ENCODE measurements at regions of chr15 and their contacts with region 1.

Region 1: DNA sequence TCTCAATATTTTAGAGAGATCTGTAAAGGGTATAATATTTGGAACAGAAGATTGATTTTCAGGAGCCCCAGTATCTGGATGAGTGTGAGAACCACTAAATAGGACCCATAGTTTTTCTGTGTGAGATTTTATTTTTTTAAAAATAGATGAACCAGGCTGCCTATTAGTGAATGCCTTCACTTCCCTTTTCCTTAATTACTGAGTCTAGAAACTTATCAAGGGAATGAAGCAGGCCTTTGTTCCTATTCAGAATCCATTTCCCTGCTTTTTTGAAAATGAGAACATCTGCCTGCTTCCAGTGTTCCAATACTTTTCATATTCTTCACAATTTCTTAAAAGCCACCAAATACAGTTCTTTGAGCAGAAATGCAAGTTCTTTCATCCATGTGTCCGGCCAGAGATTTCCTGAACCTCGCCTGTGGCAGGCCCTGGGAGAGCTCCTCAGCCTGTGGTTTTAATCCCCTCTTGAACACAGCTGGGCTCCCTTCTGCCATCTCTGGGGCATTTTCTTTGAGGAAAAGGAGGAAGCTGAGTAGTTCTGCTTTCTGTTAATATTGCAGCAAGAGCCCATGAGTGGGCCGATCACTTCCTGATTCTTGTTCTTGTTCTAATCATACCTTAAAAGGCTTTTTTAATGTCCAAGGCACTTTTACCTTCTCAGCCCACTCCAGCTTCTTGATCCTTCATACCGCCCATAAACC is 4.7 kb downstream of the EHD4 start:
- DNase-seq: peak; percentile 77

Region 2: DNA sequence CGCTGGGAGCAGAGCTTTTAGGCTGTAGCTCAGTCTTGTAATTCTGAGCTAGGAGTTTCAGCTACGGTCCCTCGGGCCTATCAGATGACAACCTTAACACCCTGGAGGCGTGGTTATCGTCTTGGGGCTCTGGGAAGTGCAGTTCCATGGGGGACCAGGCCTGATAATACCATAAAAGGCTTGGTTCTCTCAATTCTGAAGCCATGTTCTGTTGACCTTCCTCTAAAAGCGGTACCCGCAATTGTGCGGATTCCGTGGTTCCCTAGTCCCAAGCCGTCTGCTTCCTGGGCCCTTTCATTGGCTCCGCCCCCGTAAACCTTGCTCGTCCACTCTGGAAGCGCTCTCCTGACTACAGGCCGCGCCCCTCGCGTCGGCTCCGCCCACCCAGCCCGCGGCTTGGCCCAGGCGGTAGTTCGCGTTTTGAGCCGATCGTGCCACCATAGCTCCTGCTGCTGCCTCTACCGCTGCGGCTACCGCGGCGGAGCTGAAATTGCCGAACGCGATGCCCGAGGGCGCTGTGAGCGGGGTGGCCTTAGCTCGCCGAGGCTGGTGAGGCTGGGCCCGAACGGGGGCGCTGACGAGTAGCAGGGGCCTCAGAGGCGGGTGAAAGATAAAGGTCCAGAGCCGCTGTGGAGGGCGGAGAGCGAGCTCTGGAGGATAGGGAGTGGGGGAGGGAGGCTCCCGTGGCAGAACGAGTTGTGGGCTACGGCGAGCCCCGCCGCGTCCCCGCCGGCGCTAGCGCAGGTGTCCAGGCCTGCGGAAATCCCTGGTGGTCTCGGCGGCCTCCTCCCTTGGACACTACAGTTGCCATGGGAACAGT is 193.4 kb before region 1 on chr15 and contains the start of gene MAPKBP1:
- intact Hi-C with region 1: no loop called
- DNase-seq: peak; percentile 99
- total RNA-seq, gene MAPKBP1: 15.6 TPM

Region 3: GRCh38 chr15:41919954-41920538 is 47.6 kb before region 1 on chr15:
- intact Hi-C with region 1: loop called (anchors 2 kb)
- DNase-seq: no peak

Region 4: DNA sequence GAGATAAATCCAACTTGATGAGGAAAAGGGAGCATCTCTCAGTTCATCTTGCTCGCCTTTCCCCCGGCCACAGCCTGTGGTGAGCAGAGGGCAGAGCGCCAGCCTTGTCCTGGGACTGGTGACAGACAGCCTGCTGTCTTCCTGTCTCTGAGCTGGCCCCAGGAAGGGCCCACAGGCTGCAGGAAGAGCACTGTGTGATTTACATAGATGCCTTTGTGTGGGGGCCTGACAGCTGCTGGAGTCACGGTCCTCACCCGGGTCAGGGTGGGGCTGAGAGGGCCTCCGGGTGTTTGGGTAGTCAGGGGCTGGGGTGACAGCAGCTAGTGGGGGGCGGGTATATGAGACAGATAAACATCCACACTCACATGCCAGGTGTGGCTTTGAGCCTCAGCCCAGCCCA is 97.4 kb after region 1 on chr15:
- intact Hi-C with region 1: no loop called
- DNase-seq: peak; percentile 56